Mammary epithelial cell (primary cell): ENCODE measurements at regions of chr22 and their contacts with region 1.

Region 1: DNA sequence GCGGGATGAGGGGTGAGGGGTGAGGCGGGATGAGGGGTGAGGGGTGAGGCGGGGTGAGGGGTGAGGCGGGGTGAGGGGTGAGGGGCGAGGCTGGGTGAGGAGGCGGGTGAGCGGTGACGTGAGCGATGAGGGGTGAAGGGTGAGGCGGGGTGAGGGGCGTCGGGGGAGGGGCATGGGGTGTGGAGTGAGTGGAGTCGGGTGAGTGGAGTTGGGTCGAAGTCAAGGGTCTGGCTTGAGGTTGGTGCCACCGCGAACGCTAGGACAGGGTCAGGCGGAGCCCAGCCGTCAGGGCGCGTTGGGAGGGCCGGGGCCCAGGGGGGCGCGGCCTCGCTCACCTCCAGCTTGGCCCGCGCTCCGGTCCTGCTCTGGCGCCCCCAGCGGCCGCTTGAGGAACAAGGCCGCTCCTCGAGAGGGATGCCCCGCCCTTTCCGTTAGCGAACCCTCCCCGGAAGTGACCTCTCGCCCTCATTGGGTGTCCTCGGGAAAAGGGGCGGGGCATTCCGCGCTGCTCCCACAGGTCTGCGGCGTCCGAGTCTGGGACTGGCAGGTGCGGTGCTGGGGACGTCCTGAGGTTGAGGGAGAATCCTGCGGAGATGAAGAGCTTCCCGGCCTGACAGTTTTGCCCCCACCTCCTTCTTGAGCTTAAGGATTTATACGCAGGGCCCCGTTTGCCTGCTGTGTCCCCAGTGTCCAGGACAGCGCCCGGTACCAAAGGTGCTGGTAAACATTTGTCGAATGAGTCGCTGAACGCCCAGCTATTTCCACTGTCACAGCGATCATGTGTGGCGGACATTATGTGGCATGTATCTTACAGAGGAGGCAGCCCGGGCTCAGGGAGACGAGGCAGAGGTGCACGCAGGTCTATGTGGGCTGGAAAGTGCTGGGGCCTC is at the start of gene SYCE3:
- DNase-seq: peak; percentile 91
- H3K4me3 ChIP-seq: peak within 1 kb of the TSS; percentile 57 to 79 (median 69)
- H3K27ac ChIP-seq: no peak within 1 kb of the TSS
- H3K4me1 ChIP-seq: peaks cover 15% of the 10 kb centered on the region
- H3K27me3 ChIP-seq: no peaks in the 10 kb centered on the region
- CTCF ChIP-seq: peak; percentile 75 to 92
- total RNA-seq, gene SYCE3: not detected

Region 2: GRCh38 chr22:50157709-50158375 is 404.9 kb before region 1 on chr22:
- CTCF ChIA-PET with region 1: no interaction called
- dilution Hi-C with region 1: loop called (anchors 10 kb)
- in situ Hi-C with region 1: no loop called
- intact Hi-C with region 1: no loop called
- DNase-seq: peak; percentile 68
- H3K4me3 ChIP-seq: peak overlapping the region in 1 of 3 experiments; percentile 26
- H3K27ac ChIP-seq: no peak overlapping the region
- H3K4me1 ChIP-seq: peaks cover 10% of the 10 kb centered on the region
- H3K27me3 ChIP-seq: no peaks in the 10 kb centered on the region
- CTCF ChIP-seq: no peak

Region 3: GRCh38 chr22:50507991-50508884 is 54.5 kb before region 1 on chr22 and contains the start of gene NCAPH2:
- CTCF ChIA-PET with region 1: no interaction called
- dilution Hi-C with region 1: no loop called
- in situ Hi-C with region 1: no loop called
- intact Hi-C with region 1: loop called (anchors 1 kb)
- DNase-seq: peak; percentile 93
- H3K4me3 ChIP-seq: peak within 1 kb of the TSS; percentile 82 to 96 (median 95)
- H3K27ac ChIP-seq: peak within 1 kb of the TSS; percentile 59
- H3K4me1 ChIP-seq: peaks cover 37% of the 10 kb centered on the region
- H3K27me3 ChIP-seq: no peaks in the 10 kb centered on the region
- CTCF ChIP-seq: peak in 1 of 2 donors; percentile 16
- total RNA-seq, gene NCAPH2: 18.2 to 41.0 TPM

Region 4: GRCh38 chr22:50525390-50526068 is 37.2 kb before region 1 on chr22 and contains the start of gene SCO2:
- CTCF ChIA-PET with region 1: interaction called, 19 read pairs
- dilution Hi-C with region 1: no loop called
- in situ Hi-C with region 1: no loop called
- intact Hi-C with region 1: loop called (anchors 1 kb)
- DNase-seq: peak; percentile 97
- H3K4me3 ChIP-seq: peak within 1 kb of the TSS; percentile 64 to 95 (median 86)
- H3K27ac ChIP-seq: peak within 1 kb of the TSS; percentile 39
- H3K4me1 ChIP-seq: peaks cover 27% of the 10 kb centered on the region
- H3K27me3 ChIP-seq: no peaks in the 10 kb centered on the region
- CTCF ChIP-seq: peak; percentile 18 to 60
- total RNA-seq, gene SCO2: 2.8 to 6.6 TPM

Region 5: DNA sequence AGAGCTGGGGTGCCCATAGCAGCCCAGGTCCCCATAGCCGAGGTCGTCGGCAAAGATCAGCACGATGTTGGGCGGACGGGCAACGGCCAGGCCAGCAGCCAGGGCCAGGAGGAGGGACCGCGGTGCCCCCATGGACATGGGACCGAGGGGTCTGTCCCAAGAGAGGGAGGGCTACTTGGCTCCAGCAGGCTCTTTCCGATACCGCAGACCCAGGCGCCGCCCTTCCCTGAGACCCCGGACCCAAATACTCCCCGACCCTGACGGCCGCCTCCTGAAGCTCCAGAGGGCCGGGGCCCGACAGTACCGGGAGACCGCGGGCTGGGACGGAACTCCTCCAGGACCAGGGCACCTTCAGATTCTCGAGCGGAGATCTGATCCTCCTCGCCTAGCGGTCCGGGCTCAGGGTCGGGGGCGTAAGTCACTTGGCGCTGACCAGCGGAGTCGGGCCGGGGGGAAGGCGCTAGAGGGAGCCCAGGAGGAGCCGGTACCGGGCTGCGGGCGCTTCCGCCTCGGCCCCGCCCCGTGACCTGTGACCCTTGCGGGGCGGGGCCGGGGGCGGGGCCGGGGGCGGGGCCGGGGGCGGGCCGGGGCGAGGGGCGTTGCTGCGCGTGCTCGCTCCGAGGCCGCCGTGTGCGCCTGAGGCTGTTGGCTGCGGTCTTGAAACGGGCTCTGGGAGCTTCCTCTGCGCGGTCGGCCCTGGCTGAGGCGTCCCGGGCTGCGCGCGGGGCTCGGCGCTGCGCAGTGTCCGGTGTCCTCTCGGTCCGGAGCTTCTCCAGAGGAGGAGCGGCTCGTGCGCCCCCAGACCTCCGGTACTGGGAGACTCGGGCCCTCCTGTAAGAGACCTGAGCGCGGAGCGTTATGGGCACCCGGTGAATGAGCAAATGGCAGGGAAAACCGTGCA is 65.1 kb after region 1 on chr22 and contains the start of gene ARSA:
- CTCF ChIA-PET with region 1: no interaction called
- dilution Hi-C with region 1: no loop called
- in situ Hi-C with region 1: no loop called
- intact Hi-C with region 1: no loop called
- DNase-seq: peak; percentile 76
- H3K4me3 ChIP-seq: peak within 1 kb of the TSS; percentile 88 to 98 (median 91)
- H3K27ac ChIP-seq: peak within 1 kb of the TSS; percentile 14
- H3K4me1 ChIP-seq: peaks cover 23% of the 10 kb centered on the region
- H3K27me3 ChIP-seq: no peaks in the 10 kb centered on the region
- CTCF ChIP-seq: peak in 1 of 2 donors; percentile 64
- total RNA-seq, gene ARSA: 32.7 to 50.4 TPM